Activated naive CD8-positive, alpha-beta T cell treated with anti-CD3 and anti-CD28 coated beads, Interleukin-2, amount 10 ng/mL, durations not matched to agents 7 days and 5 days (primary cell): ENCODE measurements at regions of chr9 and their contacts with region 1.

Region 1: DNA sequence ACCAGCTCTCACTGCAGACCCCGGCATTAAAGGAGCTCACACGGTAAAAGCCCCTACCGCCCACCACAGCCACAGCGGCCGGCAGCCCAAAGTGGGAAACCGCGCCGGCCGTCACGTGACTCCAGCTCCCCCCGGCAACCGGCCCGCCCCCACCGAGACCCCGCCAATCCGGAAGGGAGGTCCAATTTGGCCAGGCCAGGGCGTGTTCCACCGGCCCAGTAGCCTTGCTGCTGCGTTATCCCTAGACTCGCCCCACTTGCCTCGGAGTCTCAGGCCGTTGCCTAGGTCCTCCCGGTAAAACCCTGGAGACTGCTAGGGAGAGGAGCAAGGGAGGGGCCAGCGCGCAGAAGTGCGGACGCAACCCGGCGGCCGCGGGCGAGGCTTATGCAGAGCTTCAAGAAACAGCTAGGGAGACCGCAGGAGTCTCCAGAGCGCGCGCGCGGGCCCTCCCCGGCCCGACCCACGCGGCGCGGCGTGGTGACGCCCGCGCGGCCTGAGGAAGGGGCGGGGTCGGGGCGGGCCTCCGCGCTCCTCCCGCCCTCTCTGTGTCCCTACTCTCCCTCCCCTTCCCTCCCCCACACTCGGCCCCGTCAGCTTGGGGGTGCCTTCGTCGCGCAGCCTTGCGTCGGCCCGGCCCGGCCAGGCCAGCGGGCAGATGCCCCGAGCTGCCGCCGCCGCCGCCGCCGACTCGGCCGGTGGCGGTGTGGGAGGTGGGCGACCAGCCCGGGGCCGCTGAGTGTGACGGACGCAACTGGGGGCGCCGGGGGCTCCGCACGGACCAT is at the start of gene RIC1:
- DNase-seq: peak; percentile 94
- ATAC-seq: peak; percentile 88
- H3K4me3 Mint-ChIP-seq: peak within 1 kb of the TSS; percentile 99
- H3K27ac Mint-ChIP-seq: peak within 1 kb of the TSS; percentile 99
- H3K4me1 Mint-ChIP-seq: peaks cover 46% of the 10 kb centered on the region
- H3K27me3 Mint-ChIP-seq: no peaks in the 10 kb centered on the region
- total RNA-seq, gene RIC1: 20.7 to 21.4 TPM

Region 2: GRCh38 chr9:5450359-5451091 is 178.2 kb before region 1 on chr9 and contains the start of gene CD274:
- POLR2A ChIA-PET with region 1: interaction called, 18 read pairs
- DNase-seq: peak; percentile 88
- ATAC-seq: peak; percentile 95
- H3K4me3 Mint-ChIP-seq: peak within 1 kb of the TSS; percentile 92
- H3K27ac Mint-ChIP-seq: peak within 1 kb of the TSS; percentile 95
- H3K4me1 Mint-ChIP-seq: peaks cover 56% of the 10 kb centered on the region
- H3K27me3 Mint-ChIP-seq: no peaks in the 10 kb centered on the region
- total RNA-seq, gene CD274: 6.8 to 9.8 TPM

Region 3: GRCh38 chr9:5593904-5594303 is 34.8 kb before region 1 on chr9:
- POLR2A ChIA-PET with region 1: interaction called, 13 read pairs
- DNase-seq: no peak
- ATAC-seq: no peak
- H3K4me3 Mint-ChIP-seq: no peak overlapping the region
- H3K27ac Mint-ChIP-seq: no peak overlapping the region
- H3K4me1 Mint-ChIP-seq: peaks cover 6% of the 10 kb centered on the region
- H3K27me3 Mint-ChIP-seq: peaks cover 1% of the 10 kb centered on the region

Region 4: GRCh38 chr9:5608298-5609225 is 20.2 kb before region 1 on chr9:
- POLR2A ChIA-PET with region 1: interaction called, 29 read pairs
- DNase-seq: no peak
- ATAC-seq: peak; percentile 82
- H3K4me3 Mint-ChIP-seq: peak overlapping the region; percentile 87
- H3K27ac Mint-ChIP-seq: peak overlapping the region; percentile 88
- H3K4me1 Mint-ChIP-seq: peaks cover 24% of the 10 kb centered on the region
- H3K27me3 Mint-ChIP-seq: no peaks in the 10 kb centered on the region

Region 5: GRCh38 chr9:5714501-5715401 is 86.0 kb after region 1 on chr9:
- POLR2A ChIA-PET with region 1: no interaction called
- DNase-seq: no peak
- ATAC-seq: no peak
- H3K4me3 Mint-ChIP-seq: no peak overlapping the region
- H3K27ac Mint-ChIP-seq: no peak overlapping the region
- H3K4me1 Mint-ChIP-seq: peaks cover 1% of the 10 kb centered on the region
- H3K27me3 Mint-ChIP-seq: no peaks in the 10 kb centered on the region

Region 6: DNA sequence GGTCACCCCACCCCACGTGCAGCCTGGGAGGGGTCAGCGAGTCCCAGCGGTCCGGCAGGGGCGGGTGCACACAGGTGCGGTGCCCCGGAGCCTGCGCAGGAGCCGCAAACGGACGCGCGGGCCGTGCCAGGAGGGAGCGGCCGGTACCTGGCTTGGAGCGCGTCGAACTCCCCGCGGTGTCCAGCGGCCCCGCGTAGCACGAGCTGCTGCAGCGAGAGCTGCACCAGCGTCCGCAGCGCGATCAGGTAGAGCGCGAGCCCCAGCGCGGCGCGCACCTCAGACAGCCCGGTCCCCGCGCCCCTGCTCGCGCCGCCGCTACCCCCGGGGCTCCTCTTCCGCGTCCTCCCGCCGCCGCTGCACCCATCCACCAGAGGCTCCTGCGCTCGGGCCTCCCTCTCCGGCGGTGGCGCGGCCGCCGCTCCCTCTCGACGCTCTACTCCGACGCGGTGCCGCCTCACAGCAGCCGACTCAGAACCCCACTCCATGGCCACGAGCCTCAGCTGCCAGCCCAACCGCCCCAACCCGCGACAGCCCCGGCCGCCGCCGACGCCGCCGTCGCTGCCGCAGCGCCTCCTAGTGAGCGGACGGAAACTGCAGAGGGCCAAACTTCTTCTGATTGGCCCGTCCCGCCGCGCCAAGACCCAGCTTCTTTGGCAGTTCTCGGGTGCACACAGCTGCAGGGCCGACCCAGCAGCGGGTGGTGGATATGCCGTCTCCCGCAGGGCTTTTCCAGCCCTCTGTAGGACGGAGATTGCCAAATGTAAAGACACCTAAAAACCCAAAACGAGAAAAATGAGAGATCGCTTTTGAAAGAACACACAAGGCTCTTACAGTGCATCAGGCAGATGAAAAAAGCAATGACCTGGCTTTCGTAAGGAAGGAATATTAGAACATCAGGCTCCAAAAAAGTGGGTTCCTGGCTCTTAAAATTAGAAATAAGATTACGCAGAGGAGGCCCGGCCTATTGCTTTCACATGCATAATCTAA is 204.1 kb after region 1 on chr9 and contains the start of gene ERMP1:
- POLR2A ChIA-PET with region 1: interaction called, 11 read pairs
- DNase-seq: peak; percentile 94
- ATAC-seq: peak; percentile 88
- H3K4me3 Mint-ChIP-seq: peak within 1 kb of the TSS; percentile 92
- H3K27ac Mint-ChIP-seq: peak within 1 kb of the TSS; percentile 85
- H3K4me1 Mint-ChIP-seq: peaks cover 40% of the 10 kb centered on the region
- H3K27me3 Mint-ChIP-seq: no peaks in the 10 kb centered on the region
- total RNA-seq, gene ERMP1: 26.5 to 27.7 TPM

Region 7: DNA sequence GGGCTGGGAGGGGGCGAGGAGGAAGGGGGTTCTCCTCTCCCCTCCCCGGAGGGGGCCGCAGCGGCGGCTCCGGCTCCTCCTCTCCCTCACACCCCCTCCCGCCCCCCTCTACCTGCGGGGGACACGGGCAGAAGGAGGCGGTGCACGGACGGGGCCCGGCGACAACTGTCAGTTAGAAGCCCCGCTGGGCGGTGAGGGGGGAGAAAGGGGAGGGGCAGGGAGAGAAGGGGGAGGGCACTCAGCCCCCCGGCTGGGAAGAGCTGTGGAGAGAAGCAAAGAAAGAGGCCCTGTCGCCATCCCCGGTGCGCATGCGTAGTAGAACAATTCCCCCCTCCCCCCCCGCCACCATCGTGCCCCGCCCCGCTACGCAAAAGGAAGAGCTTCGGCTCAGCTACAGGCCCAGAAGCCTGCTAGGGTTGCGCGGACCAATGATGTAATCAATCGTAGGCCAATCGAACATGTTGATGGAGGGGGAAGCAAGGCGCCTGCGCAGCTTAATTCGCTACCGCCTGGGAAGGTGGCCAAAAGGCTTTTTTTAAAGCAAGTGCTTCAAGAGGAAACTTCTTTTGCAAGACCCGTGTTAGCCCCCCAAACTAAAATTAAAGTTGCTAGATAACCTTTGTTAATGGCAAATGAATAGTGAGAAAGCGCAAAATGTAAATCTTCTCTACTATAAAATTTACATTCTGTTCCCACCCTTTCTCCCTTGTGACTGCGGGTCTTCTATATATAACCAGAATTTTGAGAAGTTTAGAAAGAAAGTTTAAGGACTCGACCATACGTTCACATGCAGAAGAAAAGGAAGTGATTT is 379.7 kb after region 1 on chr9:
- POLR2A ChIA-PET with region 1: interaction called, 11 read pairs
- DNase-seq: peak; percentile 87
- ATAC-seq: peak; percentile 77
- H3K4me3 Mint-ChIP-seq: peak overlapping the region; percentile 81
- H3K27ac Mint-ChIP-seq: peak overlapping the region; percentile 86
- H3K4me1 Mint-ChIP-seq: peaks cover 38% of the 10 kb centered on the region
- H3K27me3 Mint-ChIP-seq: no peaks in the 10 kb centered on the region